ENCODE measurements at regions of chr11 and their contacts with region 1.

Region 1: DNA sequence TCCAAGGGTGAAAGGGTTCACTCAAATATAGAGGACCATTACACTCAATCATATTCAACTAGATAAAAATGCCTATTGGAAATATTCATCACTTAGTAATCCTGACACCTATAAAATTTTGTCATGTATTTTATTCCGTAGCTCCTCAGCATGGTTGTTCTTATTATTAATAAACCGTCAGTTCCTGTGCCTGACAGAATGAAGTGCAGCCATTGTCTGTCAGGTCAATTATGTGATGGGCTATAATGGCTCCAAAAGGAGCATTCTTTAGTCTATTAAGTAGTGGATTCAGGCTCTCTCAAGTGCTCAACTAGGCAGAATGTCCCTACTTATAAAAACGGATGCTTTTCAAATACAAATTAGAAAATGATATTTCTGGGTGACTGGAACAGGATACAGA is 916.1 kb upstream of the ANO3 start:
- DNase-seq: no peak
- ATAC-seq: no peak
- H3K4me3 ChIP-seq: no peak overlapping the region
- H3K27ac ChIP-seq: no peak overlapping the region
- H3K4me1 ChIP-seq: no peaks in the 10 kb centered on the region
- H3K27me3 ChIP-seq: no peaks in the 10 kb centered on the region
- CTCF ChIP-seq: no peak

Region 2: GRCh38 chr11:25119416-25119815 is 296.4 kb before region 1 on chr11:
- CTCF ChIA-PET with region 1: no interaction called
- POLR2A ChIA-PET with region 1: no interaction called
- in situ Hi-C with region 1: no loop called
- intact Hi-C with region 1: no loop called
- DNase-seq: no peak
- ATAC-seq: no peak
- H3K4me3 ChIP-seq: no peak overlapping the region
- H3K27ac ChIP-seq: no peak overlapping the region
- H3K4me1 ChIP-seq: no peaks in the 10 kb centered on the region
- H3K27me3 ChIP-seq: no peaks in the 10 kb centered on the region
- CTCF ChIP-seq: no peak

Region 3: GRCh38 chr11:25309818-25310217 is 106.0 kb before region 1 on chr11:
- CTCF ChIA-PET with region 1: no interaction called
- POLR2A ChIA-PET with region 1: no interaction called
- in situ Hi-C with region 1: no loop called
- intact Hi-C with region 1: no loop called
- DNase-seq: no peak
- ATAC-seq: no peak
- H3K4me3 ChIP-seq: no peak overlapping the region
- H3K27ac ChIP-seq: no peak overlapping the region
- H3K4me1 ChIP-seq: no peaks in the 10 kb centered on the region
- H3K27me3 ChIP-seq: no peaks in the 10 kb centered on the region
- CTCF ChIP-seq: no peak

Region 4: DNA sequence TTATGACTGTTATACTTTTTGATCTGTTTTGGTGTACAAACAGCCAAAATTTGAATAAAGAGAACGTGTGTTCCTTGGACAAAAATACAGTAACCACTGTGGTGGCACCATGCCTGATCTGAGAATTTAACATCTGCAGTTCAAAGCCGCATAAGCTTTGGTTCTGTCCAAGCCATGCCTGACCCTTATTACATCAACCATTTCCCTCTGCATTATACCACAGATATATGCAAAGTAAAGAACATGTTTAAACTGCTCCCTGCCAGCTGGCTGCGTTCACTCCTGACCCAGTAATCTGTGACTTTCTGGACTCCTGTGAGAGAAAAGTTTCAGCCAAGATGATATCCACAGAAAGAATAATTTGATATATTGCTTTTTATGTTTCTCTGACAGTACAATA is 25.6 kb after region 1 on chr11:
- CTCF ChIA-PET with region 1: interaction called, 16 read pairs
- POLR2A ChIA-PET with region 1: no interaction called
- in situ Hi-C with region 1: no loop called
- intact Hi-C with region 1: no loop called
- DNase-seq: no peak
- ATAC-seq: no peak
- H3K4me3 ChIP-seq: no peak overlapping the region
- H3K27ac ChIP-seq: no peak overlapping the region
- H3K4me1 ChIP-seq: no peaks in the 10 kb centered on the region
- H3K27me3 ChIP-seq: no peaks in the 10 kb centered on the region
- CTCF ChIP-seq: no peak

Region 5: GRCh38 chr11:25587496-25587895 is 171.7 kb after region 1 on chr11:
- CTCF ChIA-PET with region 1: no interaction called
- POLR2A ChIA-PET with region 1: no interaction called
- in situ Hi-C with region 1: no loop called
- intact Hi-C with region 1: no loop called
- DNase-seq: no peak
- ATAC-seq: no peak
- H3K4me3 ChIP-seq: no peak overlapping the region
- H3K27ac ChIP-seq: no peak overlapping the region
- H3K4me1 ChIP-seq: no peaks in the 10 kb centered on the region
- H3K27me3 ChIP-seq: no peaks in the 10 kb centered on the region
- CTCF ChIP-seq: no peak

Measured in Panc1 (cell line).